ENCODE measurements at regions of chr6 and their contacts with region 1.

Region 1: DNA sequence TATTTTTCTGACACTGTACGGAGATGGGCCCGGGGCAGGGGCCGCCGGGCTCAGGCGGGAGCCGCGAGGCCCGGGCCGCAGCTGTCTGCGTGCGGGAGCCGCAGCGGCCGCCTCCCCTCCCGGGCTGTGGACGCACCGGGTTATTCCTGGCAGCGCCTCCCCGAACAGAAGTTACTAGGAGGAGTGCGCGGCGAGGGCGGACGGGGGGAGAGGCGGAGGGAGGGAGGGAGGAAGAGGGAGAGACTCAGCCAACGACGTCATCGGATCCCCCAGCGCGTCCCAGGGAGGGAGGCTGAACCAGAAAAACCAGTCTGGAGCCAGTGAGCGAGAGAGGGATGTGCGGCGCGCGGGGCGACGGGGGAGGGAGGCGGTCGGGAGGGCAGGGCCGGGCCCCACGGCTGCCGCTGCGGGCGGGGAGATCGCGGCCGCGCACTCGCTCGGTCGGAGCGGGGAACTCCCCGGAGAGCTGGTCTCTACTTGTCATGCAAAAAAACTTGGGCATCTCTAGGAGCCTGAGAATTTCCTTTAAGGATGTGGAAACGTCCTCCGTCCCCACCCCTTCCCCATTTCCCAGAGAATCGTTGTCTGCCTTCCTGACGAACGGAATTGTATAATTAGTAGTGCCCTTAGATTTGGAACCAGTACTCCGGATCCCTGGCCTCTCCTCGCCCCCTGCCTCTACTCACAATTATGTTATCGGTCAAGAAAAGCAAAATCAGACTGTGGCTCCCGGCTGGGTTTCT is 1.4 kb upstream of the HIVEP2 start:
- DNase-seq: peak; percentile 97 to 99
- ATAC-seq: peak; percentile 81 to 93 (median 86)
- H3K4me3 ChIP-seq: peak overlapping the region; percentile 59 to 94 (median 90)
- H3K27ac ChIP-seq: peak overlapping the region; percentile 90 to 100 (median 99)
- H3K4me1 ChIP-seq: peaks cover 0 to 37% (median 23%) of the 10 kb centered on the region in 9 donors
- H3K27me3 ChIP-seq: no peaks in the 10 kb centered on the region
- CTCF ChIP-seq: no peak

Region 2: DNA sequence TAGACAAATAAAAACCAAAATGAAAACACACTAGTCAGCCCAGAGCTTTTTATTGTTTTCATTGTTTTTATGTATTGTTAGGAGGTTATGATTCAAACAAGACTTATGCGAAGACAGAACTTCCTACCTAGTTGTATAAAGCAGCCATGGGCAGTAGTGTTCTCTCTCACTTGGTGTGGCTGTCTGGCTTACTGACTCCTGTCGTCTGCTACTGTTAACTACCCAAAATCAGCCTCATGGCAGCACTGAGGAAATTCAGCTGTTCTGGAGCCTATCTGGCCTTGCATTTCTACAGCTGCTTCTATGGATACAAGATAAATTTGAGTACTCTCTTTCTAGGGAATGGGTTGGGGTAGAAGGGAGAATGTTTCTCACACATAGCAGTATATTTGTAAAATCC is 778.9 kb before region 1 on chr6:
- intact Hi-C with region 1: no loop called
- DNase-seq: no peak
- ATAC-seq: no peak
- H3K4me3 ChIP-seq: no peak overlapping the region
- H3K27ac ChIP-seq: no peak overlapping the region
- H3K4me1 ChIP-seq: peaks cover 0 to 21% (median 4%) of the 10 kb centered on the region in 9 donors
- H3K27me3 ChIP-seq: no peaks in the 10 kb centered on the region
- CTCF ChIP-seq: no peak

Region 3: DNA sequence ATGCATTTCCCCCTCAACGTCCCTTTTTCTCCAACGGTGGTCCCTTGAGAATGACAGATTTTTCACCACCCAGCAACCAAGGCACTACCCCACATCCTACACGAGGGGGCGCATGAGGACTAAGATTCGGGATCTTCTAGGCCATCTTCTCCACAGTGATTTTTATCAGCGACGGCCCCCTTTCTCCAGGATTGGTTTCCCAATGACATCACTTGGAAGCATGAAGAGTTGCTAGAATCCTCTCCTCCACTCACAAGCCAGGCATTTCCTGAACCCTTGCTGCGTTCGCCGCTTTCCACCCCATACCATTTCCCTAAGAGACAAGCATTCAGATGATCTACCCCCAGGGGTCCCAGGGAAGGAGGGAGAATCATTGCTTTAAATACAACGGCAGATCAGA is 253.4 kb before region 1 on chr6:
- intact Hi-C with region 1: loop called in 9 of 10 experiments (anchors 2 to 10 kb)
- DNase-seq: peak; percentile 40 to 71
- ATAC-seq: peak; percentile 69 to 85 (median 77)
- H3K4me3 ChIP-seq: no peak overlapping the region
- H3K27ac ChIP-seq: peak overlapping the region in 3 of 10 donors; percentile 23 to 51 (median 29)
- H3K4me1 ChIP-seq: peaks cover 0 to 34% (median 5%) of the 10 kb centered on the region in 9 donors
- H3K27me3 ChIP-seq: no peaks in the 10 kb centered on the region
- CTCF ChIP-seq: peak; percentile 85 to 98 (median 91)

Region 4: GRCh38 chr6:142819603-142820337 is 126.6 kb before region 1 on chr6:
- intact Hi-C with region 1: loop called in 2 of 10 experiments (anchors 5 kb)
- DNase-seq: no peak
- ATAC-seq: peak; percentile 19 to 76 (median 54)
- H3K4me3 ChIP-seq: peak overlapping the region in 9 of 10 donors; percentile 9 to 55 (median 40)
- H3K27ac ChIP-seq: peak overlapping the region; percentile 7 to 87 (median 72)
- H3K4me1 ChIP-seq: peaks cover 11 to 73% (median 56%) of the 10 kb centered on the region in 9 donors
- H3K27me3 ChIP-seq: no peaks in the 10 kb centered on the region
- CTCF ChIP-seq: no peak

Region 5: DNA sequence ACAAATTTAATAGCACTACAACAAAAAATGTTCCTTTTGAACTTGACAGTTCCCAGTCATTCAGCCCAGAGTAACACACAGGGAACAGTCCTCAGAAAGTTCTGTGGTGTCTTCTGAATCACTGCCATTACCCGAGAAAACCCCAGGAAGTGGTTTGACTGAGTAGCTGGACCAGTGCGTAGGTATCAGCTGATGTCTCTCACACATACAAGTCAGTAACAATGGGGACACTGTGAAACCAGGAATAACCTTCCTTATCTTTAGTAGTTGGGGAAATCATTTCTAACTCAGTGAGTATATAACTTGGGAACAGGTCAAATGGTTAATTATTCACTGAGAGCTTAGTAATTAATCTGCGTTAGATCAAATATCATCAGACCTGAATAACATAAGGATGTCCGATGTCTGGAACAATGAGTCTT is 74.4 kb before region 1 on chr6:
- intact Hi-C with region 1: loop called in 1 of 10 experiments (anchors 10 kb)
- DNase-seq: peak in 1 of 2 donors; percentile 56
- ATAC-seq: peak; percentile 60 to 93 (median 84)
- H3K4me3 ChIP-seq: peak overlapping the region in 1 of 10 donors; percentile 5
- H3K27ac ChIP-seq: peak overlapping the region; percentile 5 to 77 (median 56)
- H3K4me1 ChIP-seq: peaks cover 6 to 80% (median 65%) of the 10 kb centered on the region in 9 donors
- H3K27me3 ChIP-seq: no peaks in the 10 kb centered on the region
- CTCF ChIP-seq: no peak

Region 6: GRCh38 chr6:142926494-142927270 is 19.7 kb before region 1 on chr6:
- intact Hi-C with region 1: loop called in 4 of 10 experiments (anchors 2 kb)
- DNase-seq: peak; percentile 88 to 94
- ATAC-seq: peak; percentile 90 to 96 (median 93)
- H3K4me3 ChIP-seq: peak overlapping the region; percentile 55 to 76 (median 66)
- H3K27ac ChIP-seq: peak overlapping the region; percentile 94 to 98 (median 96)
- H3K4me1 ChIP-seq: peaks cover 0 to 54% (median 29%) of the 10 kb centered on the region in 9 donors
- H3K27me3 ChIP-seq: no peaks in the 10 kb centered on the region
- CTCF ChIP-seq: peak in 1 of 9 donors; percentile 8

Region 7: GRCh38 chr6:143060354-143060805 is 114.0 kb after region 1 on chr6:
- intact Hi-C with region 1: loop called in 2 of 10 experiments (anchors 5 kb)
- DNase-seq: peak; percentile 81 to 83
- ATAC-seq: peak; percentile 90 to 95 (median 92)
- H3K4me3 ChIP-seq: peak overlapping the region; percentile 77 to 96 (median 83)
- H3K27ac ChIP-seq: peak overlapping the region; percentile 90 to 97 (median 94)
- H3K4me1 ChIP-seq: peaks cover 0 to 30% (median 21%) of the 10 kb centered on the region in 9 donors
- H3K27me3 ChIP-seq: no peaks in the 10 kb centered on the region
- CTCF ChIP-seq: peak in 5 of 9 donors; percentile 6 to 35 (median 18)

Region 8: DNA sequence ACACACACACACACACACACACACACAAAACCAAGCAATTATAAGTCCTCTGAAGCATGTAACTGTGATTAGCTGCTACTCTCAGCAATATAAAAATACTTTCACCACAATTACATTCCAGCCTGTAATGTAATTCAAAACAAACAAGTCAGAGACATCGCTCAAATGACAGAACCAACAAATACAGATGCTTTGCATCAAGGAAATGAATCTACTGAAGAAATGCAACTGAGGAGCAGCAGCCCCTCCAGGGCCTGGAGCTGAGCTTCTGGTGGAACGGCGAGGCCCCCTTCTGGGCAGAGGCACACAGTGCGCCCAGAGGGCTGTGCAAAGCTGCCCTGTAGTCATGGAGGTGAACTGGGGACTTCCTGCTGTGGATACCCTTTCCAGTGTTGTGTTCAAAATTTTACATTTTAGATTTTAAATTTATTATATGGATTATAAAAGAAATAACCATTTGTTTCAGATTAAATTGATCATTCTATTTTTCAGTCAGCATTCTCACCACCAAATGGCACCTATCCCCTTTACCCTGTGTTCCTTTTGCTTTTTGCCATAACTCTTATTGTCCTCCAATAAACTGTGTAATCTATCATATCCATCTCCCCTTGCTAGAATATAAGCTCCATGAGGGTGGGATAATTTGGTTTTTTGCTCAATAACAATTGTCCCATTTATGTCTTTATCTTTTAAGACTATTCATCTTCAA is 480.9 kb after region 1 on chr6:
- intact Hi-C with region 1: loop called in 1 of 10 experiments (anchors 10 kb)
- DNase-seq: peak; percentile 53 to 71
- ATAC-seq: peak; percentile 92 to 96 (median 95)
- H3K4me3 ChIP-seq: no peak overlapping the region
- H3K27ac ChIP-seq: no peak overlapping the region
- H3K4me1 ChIP-seq: no peaks in the 10 kb centered on the region
- H3K27me3 ChIP-seq: no peaks in the 10 kb centered on the region
- CTCF ChIP-seq: peak; percentile 77 to 99 (median 93)